Mammary epithelial cell (primary cell): ENCODE measurements at regions of chr3 and their contacts with region 1.

Region 1: DNA sequence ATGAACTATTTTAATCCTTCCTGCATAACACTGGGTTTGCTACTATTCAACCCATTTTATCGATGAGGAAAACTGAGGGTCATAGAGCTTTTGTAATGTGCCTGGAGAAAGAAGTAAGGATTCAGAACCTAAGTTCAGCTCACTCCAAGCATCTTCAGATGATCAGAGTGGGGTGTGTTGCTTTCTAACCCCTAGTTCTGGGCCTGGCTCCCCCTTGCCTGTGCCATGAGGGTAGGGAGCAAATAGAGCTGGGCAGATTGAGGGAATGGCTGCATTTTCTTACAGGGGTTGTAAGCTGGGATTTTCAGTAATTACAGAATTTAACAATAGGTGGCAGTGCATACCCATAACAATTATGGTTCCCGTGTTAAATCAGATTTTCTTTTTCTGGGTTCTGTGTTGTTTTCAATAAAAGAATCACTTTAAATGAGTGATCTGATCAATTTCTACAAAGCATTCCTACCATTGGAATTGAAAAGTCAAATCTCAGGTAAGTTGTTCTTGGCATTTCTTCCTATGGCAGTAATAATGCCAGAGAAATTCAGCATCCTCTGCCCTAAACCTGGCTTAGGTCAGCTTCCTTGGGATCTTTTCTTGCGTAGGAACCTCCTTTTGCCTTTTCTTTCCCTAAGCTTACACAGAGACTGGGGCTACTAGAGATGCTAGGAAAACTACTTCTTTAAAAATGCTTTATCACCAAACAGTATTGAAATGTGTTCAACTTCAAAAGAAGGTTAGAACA is 103.8 kb upstream of the IL12A start:
- DNase-seq: no peak
- H3K4me3 ChIP-seq: no peak overlapping the region
- H3K27ac ChIP-seq: no peak overlapping the region
- H3K4me1 ChIP-seq: peaks cover 33% of the 10 kb centered on the region
- H3K27me3 ChIP-seq: no peaks in the 10 kb centered on the region
- CTCF ChIP-seq: peak; percentile 30 to 50

Region 2: GRCh38 chr3:159616212-159616825 is 268.5 kb before region 1 on chr3:
- CTCF ChIA-PET with region 1: no interaction called
- dilution Hi-C with region 1: no loop called
- in situ Hi-C with region 1: no loop called
- intact Hi-C with region 1: loop called (anchors 1 kb)
- DNase-seq: peak; percentile 48
- H3K4me3 ChIP-seq: no peak overlapping the region
- H3K27ac ChIP-seq: no peak overlapping the region
- H3K4me1 ChIP-seq: peaks cover 14% of the 10 kb centered on the region
- H3K27me3 ChIP-seq: no peaks in the 10 kb centered on the region
- CTCF ChIP-seq: peak; percentile 49 to 70

Region 3: DNA sequence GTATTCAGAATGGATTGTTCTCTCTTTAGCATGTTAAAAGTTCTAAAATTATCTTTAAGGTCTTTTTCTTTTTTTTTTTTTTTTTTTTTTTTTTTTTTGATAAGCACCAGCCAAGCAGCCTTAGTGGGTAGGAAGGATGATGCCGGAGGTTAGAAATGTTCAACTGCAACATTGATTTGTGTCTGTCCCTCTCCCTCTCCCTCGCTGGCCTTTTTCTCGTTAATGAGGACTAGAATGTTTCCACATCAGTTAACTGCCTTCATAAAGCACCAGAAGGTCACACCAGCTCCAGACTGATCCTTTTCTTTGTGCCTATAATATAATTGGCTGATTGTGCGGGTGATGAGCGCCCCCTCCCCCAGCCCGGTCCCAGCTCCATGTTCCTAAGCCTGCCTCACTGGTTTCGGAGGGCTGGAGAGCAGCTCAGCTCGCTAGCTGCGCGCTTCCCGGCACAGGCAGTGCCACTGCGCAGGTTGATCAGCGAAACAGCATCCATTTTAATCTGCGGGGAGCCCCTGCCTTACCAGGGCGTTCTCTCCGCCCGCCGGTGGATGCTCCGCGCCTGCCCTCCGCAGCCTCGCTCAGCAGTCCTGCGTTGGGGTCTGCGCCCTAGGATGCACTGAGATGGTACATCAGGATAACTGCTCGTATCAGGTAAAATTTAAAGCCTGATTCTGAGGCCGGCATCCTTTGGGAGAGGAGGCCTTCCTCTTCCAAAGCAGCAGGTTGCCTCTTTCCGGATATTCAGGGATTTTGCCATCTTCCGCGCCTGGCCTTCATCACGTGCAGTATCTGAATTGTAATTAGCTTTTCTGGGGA is 45.1 kb before region 1 on chr3:
- CTCF ChIA-PET with region 1: no interaction called
- dilution Hi-C with region 1: no loop called
- in situ Hi-C with region 1: no loop called
- intact Hi-C with region 1: loop called (anchors 5 kb)
- DNase-seq: peak; percentile 55
- H3K4me3 ChIP-seq: peak within 1 kb of the TSS; percentile 31 to 51 (median 49)
- H3K27ac ChIP-seq: peak within 1 kb of the TSS; percentile 47
- H3K4me1 ChIP-seq: peaks cover 55% of the 10 kb centered on the region
- H3K27me3 ChIP-seq: no peaks in the 10 kb centered on the region
- CTCF ChIP-seq: no peak

Region 4: GRCh38 chr3:159929435-159930141 is 44.8 kb after region 1 on chr3:
- CTCF ChIA-PET with region 1: no interaction called
- dilution Hi-C with region 1: no loop called
- in situ Hi-C with region 1: no loop called
- intact Hi-C with region 1: loop called (anchors 2 kb)
- DNase-seq: peak; percentile 50
- H3K4me3 ChIP-seq: no peak overlapping the region
- H3K27ac ChIP-seq: peak overlapping the region; percentile 85
- H3K4me1 ChIP-seq: peaks cover 28% of the 10 kb centered on the region
- H3K27me3 ChIP-seq: no peaks in the 10 kb centered on the region
- CTCF ChIP-seq: peak; percentile 20 to 24

Region 5: DNA sequence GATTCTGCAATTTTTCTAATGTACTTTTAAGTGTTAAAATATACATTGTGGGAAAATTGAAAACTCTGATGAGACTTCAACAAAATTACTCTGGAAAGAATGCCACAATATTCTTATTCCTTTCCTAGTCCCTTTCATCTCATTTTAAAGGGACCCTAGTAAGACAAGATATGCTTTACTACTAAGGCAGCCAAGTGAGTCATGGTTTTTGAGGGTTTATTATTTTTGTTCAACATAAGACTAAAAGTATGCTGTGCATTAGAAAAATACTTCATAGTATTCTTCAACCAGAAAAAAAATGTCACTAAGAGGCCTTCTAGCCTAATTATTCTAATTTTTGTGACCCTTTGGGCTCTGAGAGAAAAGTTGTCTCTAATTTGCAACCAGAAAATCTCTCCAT is 111.2 kb after region 1 on chr3:
- CTCF ChIA-PET with region 1: no interaction called
- dilution Hi-C with region 1: loop called (anchors 5 kb)
- in situ Hi-C with region 1: loop called (anchors 5 kb)
- intact Hi-C with region 1: no loop called
- DNase-seq: no peak
- H3K4me3 ChIP-seq: no peak overlapping the region
- H3K27ac ChIP-seq: no peak overlapping the region
- H3K4me1 ChIP-seq: no peaks in the 10 kb centered on the region
- H3K27me3 ChIP-seq: no peaks in the 10 kb centered on the region
- CTCF ChIP-seq: no peak

Region 6: GRCh38 chr3:160012108-160012507 is 127.3 kb after region 1 on chr3:
- CTCF ChIA-PET with region 1: no interaction called
- dilution Hi-C with region 1: no loop called
- in situ Hi-C with region 1: no loop called
- intact Hi-C with region 1: no loop called
- DNase-seq: no peak
- H3K4me3 ChIP-seq: no peak overlapping the region
- H3K27ac ChIP-seq: no peak overlapping the region
- H3K4me1 ChIP-seq: no peaks in the 10 kb centered on the region
- H3K27me3 ChIP-seq: no peaks in the 10 kb centered on the region
- CTCF ChIP-seq: no peak

Region 7: GRCh38 chr3:160343132-160343531 is 458.3 kb after region 1 on chr3:
- CTCF ChIA-PET with region 1: no interaction called
- dilution Hi-C with region 1: no loop called
- in situ Hi-C with region 1: no loop called
- intact Hi-C with region 1: loop called (anchors 10 kb)
- DNase-seq: peak; percentile 4
- H3K4me3 ChIP-seq: no peak overlapping the region
- H3K27ac ChIP-seq: no peak overlapping the region
- H3K4me1 ChIP-seq: no peaks in the 10 kb centered on the region
- H3K27me3 ChIP-seq: no peaks in the 10 kb centered on the region
- CTCF ChIP-seq: peak; percentile 41 to 51

Region 8: DNA sequence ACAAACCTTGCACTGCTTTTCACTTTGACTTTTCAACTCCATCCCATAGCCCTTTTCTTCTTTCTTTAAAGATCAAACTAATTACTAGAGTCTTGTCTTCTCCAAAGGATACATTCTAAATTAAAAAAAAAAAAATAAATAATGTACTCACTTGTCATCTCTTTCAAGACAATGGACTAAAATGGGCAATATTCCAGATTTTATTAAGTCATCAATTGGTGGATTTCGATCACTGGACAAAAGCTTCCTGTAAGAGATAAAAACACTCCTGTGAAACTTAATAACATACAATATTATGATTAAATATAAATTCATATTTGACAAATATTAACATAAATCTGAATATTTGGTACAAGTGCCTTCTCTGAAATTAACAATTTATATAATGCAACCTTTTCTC is 646.5 kb after region 1 on chr3:
- CTCF ChIA-PET with region 1: no interaction called
- dilution Hi-C with region 1: no loop called
- in situ Hi-C with region 1: no loop called
- intact Hi-C with region 1: no loop called
- DNase-seq: no peak
- H3K4me3 ChIP-seq: no peak overlapping the region
- H3K27ac ChIP-seq: no peak overlapping the region
- H3K4me1 ChIP-seq: no peaks in the 10 kb centered on the region
- H3K27me3 ChIP-seq: no peaks in the 10 kb centered on the region
- CTCF ChIP-seq: no peak